ENCODE measurements at regions of chr11 and their contacts with region 1.

Region 1: GRCh38 chr11:66386171-66387069 is 14.9 kb upstream of the SLC29A2 start:
- H3K4me3 ChIP-seq: no peak overlapping the region
- H3K27ac ChIP-seq: no peak overlapping the region
- H3K4me1 ChIP-seq: no peaks in the 10 kb centered on the region
- CTCF ChIP-seq: peak; percentile 50

Region 2: DNA sequence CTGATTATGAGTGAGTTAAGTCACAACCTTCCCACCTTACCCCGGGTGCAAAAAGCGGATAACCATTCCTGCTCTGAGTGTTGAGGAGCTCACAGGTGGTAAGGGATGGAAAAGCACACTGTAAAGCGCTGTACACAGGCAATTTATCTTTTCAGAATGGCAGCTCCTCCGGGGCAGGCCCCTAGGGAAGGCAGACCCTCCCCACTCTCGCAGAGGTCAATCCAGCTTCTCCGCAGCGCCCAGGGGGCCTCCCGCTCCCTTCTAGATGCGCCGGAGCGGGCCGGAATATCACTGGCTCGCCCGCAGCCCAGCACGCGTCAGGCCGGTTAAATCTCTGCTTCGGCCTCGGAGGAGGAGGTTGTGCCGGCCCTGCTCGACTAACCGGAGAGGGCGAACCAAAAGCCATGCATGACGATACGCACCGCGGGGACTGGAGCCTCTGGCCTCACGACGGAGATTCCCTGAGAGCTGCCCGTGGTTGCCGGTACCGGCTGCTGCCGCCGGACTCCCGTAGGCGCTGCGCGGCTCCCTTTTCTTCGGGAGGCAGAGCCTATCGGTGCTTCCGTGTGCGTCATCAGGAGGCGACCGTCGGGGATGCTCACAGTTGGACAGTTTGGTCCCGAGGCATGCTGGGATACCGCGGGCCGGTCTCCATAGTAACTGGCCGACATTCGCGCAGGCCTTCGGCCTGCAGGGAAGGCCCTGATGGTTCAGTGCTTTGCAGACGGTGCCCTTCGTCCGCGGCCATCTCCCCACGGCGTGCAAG is 41.7 kb before region 1 on chr11 and contains the start of gene BRMS1:
- CTCF ChIA-PET with region 1: interaction called, 13 read pairs
- POLR2A ChIA-PET with region 1: interaction called, 8 read pairs
- H3K4me3 ChIP-seq: peak within 1 kb of the TSS; percentile 52
- H3K27ac ChIP-seq: peak within 1 kb of the TSS; percentile 26; the same call in 1 of the 2 replicates
- H3K4me1 ChIP-seq: no peaks in the 10 kb centered on the region
- CTCF ChIP-seq: 0 out of 2 replicates have a peak, but pooled peaks have one; percentile 25

Region 3: DNA sequence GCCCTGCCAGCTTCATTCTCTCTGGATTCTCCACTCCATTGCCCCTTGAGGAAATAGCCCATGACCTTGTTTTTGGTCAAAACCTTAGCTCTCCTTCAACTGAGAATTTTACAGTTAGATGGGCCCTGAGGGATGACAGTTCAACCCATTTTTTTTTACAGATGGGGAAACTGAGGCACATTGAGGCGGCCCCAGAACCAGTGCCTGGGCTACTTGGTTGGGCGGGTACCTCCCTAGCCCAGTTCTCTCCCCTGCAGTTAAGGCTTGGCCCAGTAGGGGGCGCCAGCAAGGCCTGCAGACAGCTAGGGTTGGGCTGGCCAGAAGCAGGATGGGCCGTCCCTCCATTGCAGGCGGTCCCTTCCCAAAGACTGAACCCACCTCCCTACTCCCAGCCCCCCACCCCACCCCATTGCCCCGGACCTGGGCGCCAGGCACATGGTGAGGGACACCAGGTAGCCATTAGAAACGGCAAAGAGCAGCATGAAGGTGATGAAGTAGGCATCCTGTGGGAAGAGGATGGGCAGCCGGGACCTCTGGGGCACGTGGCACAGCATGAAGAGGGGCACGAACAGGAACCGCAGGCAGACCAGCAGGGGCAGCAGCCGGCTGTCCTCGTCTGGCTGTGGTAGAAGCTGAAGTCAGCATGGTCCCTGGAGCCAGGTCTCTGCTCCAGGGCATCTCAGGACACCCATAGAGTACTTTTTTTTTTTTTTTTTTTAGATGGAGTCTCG is 22.4 kb before region 1 on chr11:
- CTCF ChIA-PET with region 1: interaction called, 58 read pairs
- POLR2A ChIA-PET with region 1: interaction called, 3 read pairs
- H3K4me3 ChIP-seq: no peak overlapping the region
- H3K27ac ChIP-seq: no peak overlapping the region
- H3K4me1 ChIP-seq: no peaks in the 10 kb centered on the region
- CTCF ChIP-seq: peak; percentile 51

Region 4: DNA sequence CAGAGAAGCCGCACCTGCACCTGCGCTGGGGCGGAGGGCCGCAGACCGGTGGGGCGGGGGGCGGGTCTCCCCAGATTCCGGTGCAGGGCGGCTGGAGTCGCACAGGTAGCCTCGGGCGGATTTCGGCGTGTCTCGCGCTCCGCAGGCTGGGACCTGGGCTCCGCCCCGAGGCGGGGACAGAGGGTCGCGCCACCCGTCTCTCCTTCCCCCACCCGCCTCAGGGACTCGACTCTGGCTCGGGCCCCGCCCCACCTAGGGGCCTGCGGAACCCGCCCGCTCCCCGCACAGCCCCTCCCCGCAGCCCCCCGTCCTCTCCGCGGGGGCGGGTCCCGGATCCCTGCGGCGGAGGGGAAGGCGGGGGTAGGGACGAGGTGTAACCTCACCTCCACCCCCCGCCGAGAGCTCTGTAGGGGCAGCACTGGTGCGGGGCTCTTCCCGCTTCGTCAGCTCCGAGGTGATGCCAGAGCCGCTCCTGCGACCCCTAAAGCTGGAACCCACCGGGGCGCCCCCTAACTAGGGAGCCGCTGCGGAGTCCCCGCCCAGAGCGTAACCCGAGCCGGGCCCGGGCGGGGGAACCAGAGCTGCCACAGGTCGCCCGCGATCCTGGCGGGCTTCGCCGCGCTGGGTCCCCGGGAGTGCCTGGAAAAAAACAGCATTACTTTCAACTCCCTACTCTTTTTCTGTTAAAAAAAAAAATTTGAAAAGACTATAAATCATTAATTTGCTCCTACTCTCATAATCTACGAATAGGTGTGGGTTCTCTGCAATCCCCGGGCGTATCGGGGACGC is 14.6 kb before region 1 on chr11 and contains the start of gene SLC29A2:
- CTCF ChIA-PET with region 1: interaction called, 58 read pairs
- POLR2A ChIA-PET with region 1: interaction called, 14 read pairs
- H3K4me3 ChIP-seq: peak within 1 kb of the TSS; percentile 80
- H3K27ac ChIP-seq: peak within 1 kb of the TSS; percentile 72; the same call in 1 of the 2 replicates
- H3K4me1 ChIP-seq: no peaks in the 10 kb centered on the region
- CTCF ChIP-seq: 0 out of 2 replicates have a peak, but pooled peaks have one; percentile 24

Region 5: DNA sequence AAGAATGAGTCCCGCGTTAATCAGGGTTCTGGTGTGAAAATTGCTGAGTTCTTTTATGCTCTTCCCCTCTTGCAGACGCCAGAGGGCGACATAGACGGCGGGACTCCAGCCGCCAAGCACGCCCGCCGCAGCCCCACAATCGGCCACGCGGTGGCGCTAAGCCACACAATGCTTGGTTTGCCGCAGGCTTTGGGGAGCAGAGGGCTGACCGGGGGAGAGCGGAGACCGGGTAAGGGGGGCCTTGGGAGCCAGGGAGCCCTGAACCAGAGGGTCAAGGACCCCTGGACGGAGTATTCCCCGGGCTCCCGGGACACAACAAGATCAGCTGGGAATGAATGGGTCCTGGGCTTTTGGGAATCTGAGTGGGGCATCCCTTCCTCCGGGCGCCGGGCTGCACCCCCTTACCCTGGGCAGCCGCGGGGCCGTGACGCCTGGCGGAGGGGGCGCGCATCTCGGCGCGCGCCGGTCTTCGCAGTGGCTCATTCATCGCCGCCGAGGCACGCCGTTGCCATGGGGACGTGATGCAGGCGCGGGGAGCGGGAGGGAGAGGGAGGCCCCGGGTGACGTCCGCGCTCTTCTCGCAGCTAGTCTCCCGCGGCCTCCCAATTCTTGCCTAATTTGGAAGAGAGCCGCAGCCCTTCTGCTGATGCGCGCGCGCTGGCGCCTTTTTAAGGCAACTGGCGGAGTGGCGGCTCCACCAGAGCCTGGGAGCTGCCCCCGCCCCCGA is 22.2 kb after region 1 on chr11:
- CTCF ChIA-PET with region 1: interaction called, 21 read pairs
- POLR2A ChIA-PET with region 1: interaction called, 3 read pairs
- H3K4me3 ChIP-seq: peak overlapping the region; percentile 22
- H3K27ac ChIP-seq: no peak overlapping the region
- H3K4me1 ChIP-seq: no peaks in the 10 kb centered on the region
- CTCF ChIP-seq: peak; percentile 96

Region 6: GRCh38 chr11:66429983-66430602 is 43.7 kb after region 1 on chr11:
- CTCF ChIA-PET with region 1: interaction called, 24 read pairs
- POLR2A ChIA-PET with region 1: no interaction called
- H3K4me3 ChIP-seq: no peak overlapping the region
- H3K27ac ChIP-seq: no peak overlapping the region
- H3K4me1 ChIP-seq: no peaks in the 10 kb centered on the region
- CTCF ChIP-seq: peak; percentile 58

Region 7: GRCh38 chr11:66438504-66439466 is 52.4 kb after region 1 on chr11 and contains the start of gene MRPL11:
- CTCF ChIA-PET with region 1: interaction called, 13 read pairs
- POLR2A ChIA-PET with region 1: interaction called, 6 read pairs
- H3K4me3 ChIP-seq: peak within 1 kb of the TSS; percentile 68
- H3K27ac ChIP-seq: peak within 1 kb of the TSS; percentile 68
- H3K4me1 ChIP-seq: no peaks in the 10 kb centered on the region
- CTCF ChIP-seq: peak; percentile 71

Measured in HEK293 (cell line).